Sciatic nerve (tissue), 2 donors: ENCODE measurements at regions of chr6 and their contacts with region 1.

Region 1: GRCh38 chr6:61833176-61833755 is 452.8 kb downstream of the KHDRBS2 start:
- DNase-seq: no peak
- ATAC-seq: no peak

Region 2: GRCh38 chr6:61901748-61902147 is 68.5 kb after region 1 on chr6:
- intact Hi-C with region 1: no loop called
- DNase-seq: no peak
- ATAC-seq: no peak

Region 3: DNA sequence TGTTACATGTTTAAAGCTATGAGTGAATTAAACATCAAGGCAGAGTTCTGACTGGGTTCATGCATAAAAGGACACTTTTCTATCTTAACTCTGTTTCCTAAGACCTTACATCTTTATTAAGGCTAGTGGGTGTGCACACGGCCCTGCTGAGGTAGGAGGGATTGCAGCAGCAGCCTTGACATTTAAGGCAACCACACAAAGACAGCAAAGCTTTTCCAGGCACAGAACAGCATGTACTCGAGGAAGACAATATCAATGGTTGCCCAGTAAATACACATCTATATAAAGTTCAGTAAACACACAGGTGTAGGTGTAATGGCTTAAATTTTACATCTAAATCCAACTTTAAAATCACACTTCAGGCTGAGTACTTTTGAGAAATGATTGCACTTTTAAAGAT is 1659.2 kb after region 1 on chr6:
- intact Hi-C with region 1: loop called (anchors 5 kb)
- DNase-seq: no peak
- ATAC-seq: no peak